OCI-LY7 (cell line): ENCODE measurements at regions of chr22 and their contacts with region 1.

Region 1: GRCh38 chr22:18001040-18001893 is 23.1 kb downstream of the MICAL3 start:
- DNase-seq: peak; percentile 99
- H3K4me3 ChIP-seq: peak overlapping the region; percentile 91
- H3K27ac ChIP-seq: peak overlapping the region; percentile 96
- H3K4me1 ChIP-seq: peaks cover 79% of the 10 kb centered on the region
- CTCF ChIP-seq: peak; percentile 73

Region 2: DNA sequence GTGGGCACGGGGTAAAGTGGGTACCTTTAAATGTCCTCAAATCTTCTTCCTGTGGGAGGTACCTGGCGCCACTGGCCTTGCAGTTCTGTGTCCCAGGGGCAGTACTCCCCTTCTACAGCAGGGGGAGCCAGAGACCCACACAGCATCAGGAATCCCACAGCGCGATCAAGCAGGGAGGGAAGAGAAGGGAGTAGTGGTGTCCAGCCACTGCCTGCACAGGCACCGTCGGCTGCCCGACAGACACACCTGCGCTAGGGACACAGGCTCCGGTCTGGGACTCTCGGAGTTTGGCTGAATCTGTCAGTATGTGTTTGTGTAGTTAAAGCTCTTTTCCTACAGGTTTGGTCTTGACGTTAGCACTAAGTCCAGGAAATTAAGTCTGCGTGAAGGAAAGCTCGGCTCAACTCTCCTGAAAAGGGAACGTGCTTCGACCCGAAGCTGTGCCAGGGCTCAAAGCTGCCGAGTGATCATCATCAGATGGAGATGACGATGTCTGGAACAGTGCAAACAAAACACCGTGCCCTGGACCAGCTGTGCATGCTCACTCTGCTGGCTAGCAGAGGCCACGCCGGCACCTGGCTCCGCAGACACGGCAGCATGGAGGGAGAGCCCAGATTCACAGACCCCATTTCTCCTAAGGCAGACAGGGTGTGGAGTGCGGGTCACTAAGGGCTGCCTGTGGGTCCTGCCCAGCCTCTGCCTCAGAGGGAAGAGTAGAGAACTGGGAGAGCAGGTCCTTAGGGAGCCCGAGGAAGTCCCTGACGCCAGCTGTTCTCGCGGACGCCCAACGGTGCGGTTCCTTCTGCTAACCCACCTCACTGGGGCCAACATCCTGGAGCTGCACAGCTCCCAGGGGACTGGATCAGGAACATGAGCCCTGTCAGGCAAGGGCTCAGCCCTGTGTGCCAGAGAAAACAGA is 171.0 kb before region 1 on chr22:
- CTCF ChIA-PET with region 1: no interaction called
- POLR2A ChIA-PET with region 1: no interaction called
- intact Hi-C with region 1: loop called (anchors 1 kb)
- DNase-seq: peak; percentile 80
- H3K4me3 ChIP-seq: no peak overlapping the region
- H3K27ac ChIP-seq: no peak overlapping the region
- H3K4me1 ChIP-seq: no peaks in the 10 kb centered on the region
- CTCF ChIP-seq: peak; percentile 94

Region 3: GRCh38 chr22:18031695-18032454 is 30.6 kb after region 1 on chr22:
- CTCF ChIA-PET with region 1: no interaction called
- POLR2A ChIA-PET with region 1: interaction called, 16 read pairs
- intact Hi-C with region 1: no loop called
- DNase-seq: no peak
- H3K4me3 ChIP-seq: no peak overlapping the region
- H3K27ac ChIP-seq: no peak overlapping the region
- H3K4me1 ChIP-seq: peaks cover 53% of the 10 kb centered on the region
- CTCF ChIP-seq: no peak

Region 4: GRCh38 chr22:18065256-18065655 is 64.0 kb after region 1 on chr22:
- CTCF ChIA-PET with region 1: interaction called, 4 read pairs
- POLR2A ChIA-PET with region 1: interaction called, 7 read pairs
- intact Hi-C with region 1: loop called (anchors 2 kb)
- DNase-seq: peak; percentile 74
- H3K4me3 ChIP-seq: peak overlapping the region; percentile 58
- H3K27ac ChIP-seq: peak overlapping the region; percentile 99
- H3K4me1 ChIP-seq: peaks cover 77% of the 10 kb centered on the region
- CTCF ChIP-seq: peak; percentile 60; the same call in 1 of the 2 replicates

Region 5: GRCh38 chr22:18077639-18078328 is 76.5 kb after region 1 on chr22 and contains the start of gene PEX26:
- CTCF ChIA-PET with region 1: interaction called, 6 read pairs
- POLR2A ChIA-PET with region 1: interaction called, 13 read pairs
- intact Hi-C with region 1: loop called (anchors 1 kb)
- DNase-seq: peak; percentile 97
- H3K4me3 ChIP-seq: peak within 1 kb of the TSS; percentile 87
- H3K27ac ChIP-seq: peak within 1 kb of the TSS; percentile 76
- H3K4me1 ChIP-seq: peaks cover 56% of the 10 kb centered on the region
- CTCF ChIP-seq: no peak
- total RNA-seq, gene PEX26: 17.6 and 22.4 TPM in 2 replicates